ENCODE measurements at regions of chr18 and their contacts with region 1.

Region 1: GRCh38 chr18:23503038-23503962 is at the start of gene RMC1:
- DNase-seq: peak; percentile 99
- H3K4me3 Mint-ChIP-seq: peak within 1 kb of the TSS; percentile 87
- H3K27ac Mint-ChIP-seq: peak within 1 kb of the TSS; percentile 91
- H3K4me1 Mint-ChIP-seq: peaks cover 51% of the 10 kb centered on the region
- H3K27me3 Mint-ChIP-seq: no peaks in the 10 kb centered on the region
- total RNA-seq, gene RMC1: 51.0 and 52.8 TPM in 2 replicates

Region 2: DNA sequence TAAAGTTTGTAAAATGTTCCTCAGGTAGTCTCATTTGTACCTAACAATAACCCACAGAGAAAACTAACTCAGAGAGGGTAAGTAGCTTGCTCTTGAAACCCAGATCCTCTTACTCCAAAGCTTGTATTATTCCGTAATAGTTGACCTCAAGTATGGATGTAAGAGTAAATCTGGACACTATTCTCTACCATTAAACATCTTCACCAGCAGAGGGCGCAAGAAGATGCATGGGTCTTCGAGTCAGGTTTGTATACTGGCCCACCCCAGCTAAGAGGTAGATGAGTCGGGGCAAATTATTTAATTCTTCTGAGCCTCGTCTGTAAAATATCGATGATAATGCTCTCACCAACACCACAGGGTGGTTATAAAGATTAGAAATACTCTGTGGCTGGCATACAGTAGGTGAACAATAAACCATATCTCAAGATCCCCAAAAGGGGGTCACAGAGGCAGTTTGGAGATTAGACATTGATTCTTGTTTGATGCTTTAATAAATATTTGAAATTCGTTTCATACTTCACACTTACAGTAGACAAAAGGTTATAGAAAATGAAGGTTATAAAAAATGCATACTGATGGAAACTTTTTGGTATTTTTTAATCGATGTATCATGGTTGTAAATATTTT is 371.5 kb before region 1 on chr18:
- intact Hi-C with region 1: loop called (anchors 10 kb)
- DNase-seq: peak; percentile 89
- H3K4me3 Mint-ChIP-seq: no peak overlapping the region
- H3K27ac Mint-ChIP-seq: no peak overlapping the region
- H3K4me1 Mint-ChIP-seq: peaks cover 13% of the 10 kb centered on the region
- H3K27me3 Mint-ChIP-seq: peaks cover 8% of the 10 kb centered on the region

Region 3: DNA sequence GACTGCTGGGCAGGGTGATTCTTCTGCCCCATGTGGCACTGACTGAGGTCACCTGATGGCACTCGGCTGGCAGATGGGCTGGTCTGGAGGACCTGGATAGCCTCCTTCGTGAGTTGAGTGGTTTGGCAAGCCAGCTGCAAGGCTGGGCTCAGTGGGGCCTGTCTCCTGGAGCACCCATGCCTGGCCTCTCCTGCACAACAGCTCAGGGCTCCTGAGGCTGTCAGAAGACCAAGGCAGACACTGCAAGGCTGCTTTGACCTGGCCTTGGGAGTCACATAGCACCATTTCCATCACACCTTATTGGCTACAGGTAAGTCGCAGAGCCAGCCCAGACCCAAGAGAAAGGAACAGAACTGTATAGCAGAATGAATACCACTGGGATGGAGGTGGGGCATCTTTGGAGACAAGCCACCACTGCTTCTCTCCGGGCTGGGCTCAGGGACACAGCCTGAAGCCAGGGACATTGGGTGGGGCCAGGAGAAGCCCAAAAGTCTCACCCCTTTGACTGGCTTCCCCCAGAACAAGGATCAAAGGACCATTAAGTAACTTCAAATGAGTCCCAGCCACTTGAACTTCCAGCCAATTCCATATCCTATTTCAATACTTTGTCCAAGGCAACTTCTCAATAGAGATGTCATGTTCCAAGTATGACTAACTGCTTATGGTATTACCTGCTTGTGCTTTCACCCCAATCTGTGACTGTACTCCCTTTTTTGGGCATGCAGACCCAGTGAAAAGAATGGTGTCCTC is 211.7 kb before region 1 on chr18:
- intact Hi-C with region 1: no loop called
- DNase-seq: no peak
- H3K4me3 Mint-ChIP-seq: no peak overlapping the region
- H3K27ac Mint-ChIP-seq: no peak overlapping the region
- H3K4me1 Mint-ChIP-seq: no peaks in the 10 kb centered on the region
- H3K27me3 Mint-ChIP-seq: no peaks in the 10 kb centered on the region

Region 4: GRCh38 chr18:23422672-23423418 is 80.5 kb before region 1 on chr18:
- intact Hi-C with region 1: no loop called
- DNase-seq: no peak
- H3K4me3 Mint-ChIP-seq: no peak overlapping the region
- H3K27ac Mint-ChIP-seq: no peak overlapping the region
- H3K4me1 Mint-ChIP-seq: peaks cover 3% of the 10 kb centered on the region
- H3K27me3 Mint-ChIP-seq: no peaks in the 10 kb centered on the region

Region 5: GRCh38 chr18:23452728-23453679 is 50.3 kb before region 1 on chr18 and contains the start of gene RIOK3:
- intact Hi-C with region 1: loop called (anchors 1 kb)
- DNase-seq: peak; percentile 99
- H3K4me3 Mint-ChIP-seq: peak within 1 kb of the TSS; percentile 100
- H3K27ac Mint-ChIP-seq: peak within 1 kb of the TSS; percentile 95
- H3K4me1 Mint-ChIP-seq: peaks cover 38% of the 10 kb centered on the region
- H3K27me3 Mint-ChIP-seq: peaks cover 6% of the 10 kb centered on the region
- total RNA-seq, gene RIOK3: 46.7 and 53.3 TPM in 2 replicates

Region 6: GRCh38 chr18:23563377-23564043 is 60.2 kb after region 1 on chr18:
- intact Hi-C with region 1: loop called (anchors 1 kb)
- DNase-seq: no peak
- H3K4me3 Mint-ChIP-seq: no peak overlapping the region
- H3K27ac Mint-ChIP-seq: peak overlapping the region; percentile 55
- H3K4me1 Mint-ChIP-seq: peaks cover 10% of the 10 kb centered on the region
- H3K27me3 Mint-ChIP-seq: no peaks in the 10 kb centered on the region

Region 7: GRCh38 chr18:23812546-23813440 is 309.5 kb after region 1 on chr18:
- intact Hi-C with region 1: loop called (anchors 5 kb)
- DNase-seq: no peak
- H3K4me3 Mint-ChIP-seq: no peak overlapping the region
- H3K27ac Mint-ChIP-seq: no peak overlapping the region
- H3K4me1 Mint-ChIP-seq: peaks cover 20% of the 10 kb centered on the region
- H3K27me3 Mint-ChIP-seq: peaks cover 28% of the 10 kb centered on the region

Measured in activated CD4-positive, alpha-beta T cell treated with anti-CD3 and anti-CD28 coated beads, Interleukin-2, amount 10 ng/mL, durations not matched to agents 24 days and 14 days (primary cell).